ENCODE measurements at regions of chr11 and their contacts with region 1.

Region 1: GRCh38 chr11:121112498-121113455 is 11.7 kb downstream of the TECTA start:
- DNase-seq: peak; percentile 89
- H3K4me3 ChIP-seq: no peak overlapping the region
- H3K27ac ChIP-seq: no peak overlapping the region
- H3K4me1 ChIP-seq: no peaks in the 10 kb centered on the region
- H3K27me3 ChIP-seq: peaks cover 15% of the 10 kb centered on the region

Region 2: GRCh38 chr11:120511116-120511819 is 601.5 kb before region 1 on chr11 and contains the start of gene GRIK4:
- in situ Hi-C with region 1: loop called (anchors 25 kb)
- DNase-seq: peak; percentile 89
- H3K4me3 ChIP-seq: peak within 1 kb of the TSS; percentile 60
- H3K27ac ChIP-seq: no peak within 1 kb of the TSS
- H3K4me1 ChIP-seq: no peaks in the 10 kb centered on the region
- H3K27me3 ChIP-seq: peaks cover 3% of the 10 kb centered on the region; the same call in 1 of the 2 replicates
- total RNA-seq, gene GRIK4: not detected in 2 replicates

Region 3: GRCh38 chr11:122642472-122642922 is 1529.7 kb after region 1 on chr11:
- in situ Hi-C with region 1: no loop called
- DNase-seq: peak; percentile 92
- H3K4me3 ChIP-seq: no peak overlapping the region
- H3K27ac ChIP-seq: peak overlapping the region; percentile 46
- H3K4me1 ChIP-seq: peaks cover 38% of the 10 kb centered on the region
- H3K27me3 ChIP-seq: no peaks in the 10 kb centered on the region

Measured in GM23248 (cell line).